Activated CD4-positive, alpha-beta T cell treated with anti-CD3 and anti-CD28 coated beads for 36 hours (primary cell): ENCODE measurements at regions of chr21 and their contacts with region 1.

Region 1: GRCh38 chr21:14630556-14631069 is 84.5 kb upstream of the SAMSN1 start:
- DNase-seq: no peak
- ATAC-seq: peak; percentile 90
- H3K4me3 Mint-ChIP-seq: peak overlapping the region; percentile 19
- H3K27ac Mint-ChIP-seq: peak overlapping the region; percentile 77
- H3K4me1 Mint-ChIP-seq: peaks cover 16% of the 10 kb centered on the region
- H3K27me3 Mint-ChIP-seq: no peaks in the 10 kb centered on the region

Region 2: GRCh38 chr21:14523234-14523633 is 107.4 kb before region 1 on chr21:
- CTCF ChIA-PET with region 1: no interaction called
- POLR2A ChIA-PET with region 1: no interaction called
- intact Hi-C with region 1: loop called in 1 of 2 experiments (anchors 1 kb)
- DNase-seq: peak; percentile 64
- ATAC-seq: peak; percentile 79
- H3K4me3 Mint-ChIP-seq: peak overlapping the region; percentile 59
- H3K27ac Mint-ChIP-seq: peak overlapping the region; percentile 91
- H3K4me1 Mint-ChIP-seq: peaks cover 62% of the 10 kb centered on the region
- H3K27me3 Mint-ChIP-seq: no peaks in the 10 kb centered on the region

Region 3: GRCh38 chr21:14591882-14592281 is 38.7 kb before region 1 on chr21:
- CTCF ChIA-PET with region 1: no interaction called
- POLR2A ChIA-PET with region 1: no interaction called
- intact Hi-C with region 1: loop called (anchors 1 to 5 kb)
- DNase-seq: no peak
- ATAC-seq: peak; percentile 40
- H3K4me3 Mint-ChIP-seq: no peak overlapping the region
- H3K27ac Mint-ChIP-seq: peak overlapping the region; percentile 32
- H3K4me1 Mint-ChIP-seq: peaks cover 26% of the 10 kb centered on the region
- H3K27me3 Mint-ChIP-seq: no peaks in the 10 kb centered on the region

Region 4: DNA sequence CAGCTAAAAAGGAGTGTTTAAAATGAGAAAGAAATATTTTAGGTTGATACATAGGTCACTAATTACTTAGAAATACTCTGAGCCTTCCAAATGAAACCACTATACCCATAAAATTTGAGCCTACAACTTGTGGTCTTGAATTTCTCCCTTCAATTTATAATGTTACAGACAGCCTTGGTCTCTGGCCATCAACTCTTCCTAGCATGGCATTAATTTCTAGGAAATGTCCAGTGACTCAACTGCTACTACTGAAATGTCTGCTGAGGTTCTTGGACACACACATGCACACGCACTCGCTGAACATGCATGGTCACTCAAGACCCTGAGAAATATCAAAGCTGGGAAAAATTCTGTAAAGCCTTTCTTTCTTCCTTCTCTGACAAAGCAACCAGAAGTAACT is 23.4 kb before region 1 on chr21:
- CTCF ChIA-PET with region 1: interaction called, 4 read pairs
- POLR2A ChIA-PET with region 1: interaction called, 3 read pairs
- intact Hi-C with region 1: loop called in 1 of 2 experiments (anchors 1 kb)
- DNase-seq: no peak
- ATAC-seq: no peak
- H3K4me3 Mint-ChIP-seq: no peak overlapping the region
- H3K27ac Mint-ChIP-seq: no peak overlapping the region
- H3K4me1 Mint-ChIP-seq: peaks cover 22% of the 10 kb centered on the region
- H3K27me3 Mint-ChIP-seq: no peaks in the 10 kb centered on the region